MCF 10A (cell line): ENCODE measurements at regions of chr5 and their contacts with region 1.

Region 1: GRCh38 chr5:155106221-155106620 is 92.7 kb downstream of the KIF4B start:
- DNase-seq: no peak
- H3K4me3 Mint-ChIP-seq: no peak overlapping the region
- H3K27ac Mint-ChIP-seq: no peak overlapping the region
- H3K4me1 Mint-ChIP-seq: peaks cover 6% of the 10 kb centered on the region
- H3K27me3 Mint-ChIP-seq: no peaks in the 10 kb centered on the region
- CTCF ChIP-seq: no peak

Region 2: GRCh38 chr5:154112255-154112654 is 994.0 kb before region 1 on chr5:
- CTCF ChIA-PET with region 1: no interaction called
- POLR2A ChIA-PET with region 1: no interaction called
- intact Hi-C with region 1: no loop called
- DNase-seq: no peak
- H3K4me3 Mint-ChIP-seq: no peak overlapping the region
- H3K27ac Mint-ChIP-seq: no peak overlapping the region
- H3K4me1 Mint-ChIP-seq: no peaks in the 10 kb centered on the region
- H3K27me3 Mint-ChIP-seq: peaks cover 12% of the 10 kb centered on the region
- CTCF ChIP-seq: no peak

Region 3: GRCh38 chr5:155125551-155126097 is 19.4 kb after region 1 on chr5:
- CTCF ChIA-PET with region 1: no interaction called
- POLR2A ChIA-PET with region 1: no interaction called
- intact Hi-C with region 1: no loop called
- DNase-seq: no peak
- H3K4me3 Mint-ChIP-seq: no peak overlapping the region
- H3K27ac Mint-ChIP-seq: no peak overlapping the region
- H3K4me1 Mint-ChIP-seq: peaks cover 11% of the 10 kb centered on the region
- H3K27me3 Mint-ChIP-seq: no peaks in the 10 kb centered on the region
- CTCF ChIP-seq: no peak

Region 4: DNA sequence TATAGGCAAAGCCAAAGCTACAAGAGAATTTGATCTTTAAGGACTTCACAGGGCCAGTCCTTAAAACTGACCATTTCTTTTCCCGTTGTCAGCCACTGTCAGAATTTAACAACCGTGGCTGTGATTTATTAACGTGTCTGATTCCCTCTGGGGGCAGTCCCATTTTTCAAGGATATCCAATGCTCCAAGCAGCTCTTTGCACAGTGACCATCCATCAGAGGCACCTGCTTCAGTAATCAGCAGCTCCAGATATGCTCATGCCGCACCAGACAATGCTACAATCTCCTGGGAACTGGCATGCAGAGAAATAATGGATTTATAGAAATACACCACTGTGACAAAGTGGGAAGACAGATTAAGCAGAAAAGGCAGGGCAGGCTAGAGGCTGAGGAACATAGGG is 1580.6 kb after region 1 on chr5:
- CTCF ChIA-PET with region 1: no interaction called
- POLR2A ChIA-PET with region 1: no interaction called
- intact Hi-C with region 1: loop called (anchors 5 kb)
- DNase-seq: no peak
- H3K4me3 Mint-ChIP-seq: no peak overlapping the region
- H3K27ac Mint-ChIP-seq: no peak overlapping the region
- H3K4me1 Mint-ChIP-seq: no peaks in the 10 kb centered on the region
- H3K27me3 Mint-ChIP-seq: peaks cover 18% of the 10 kb centered on the region
- CTCF ChIP-seq: no peak